Aorta (tissue), 5 donors: ENCODE measurements at regions of chr11 and their contacts with region 1.

Region 1: GRCh38 chr11:12433571-12434324 is 56.4 kb downstream of the PARVA start:
- DNase-seq: peak; percentile 66 to 81
- ATAC-seq: peak; percentile 36
- H3K4me3 ChIP-seq: no peak overlapping the region
- H3K27ac ChIP-seq: peak overlapping the region; percentile 97 to 99
- H3K4me1 ChIP-seq: peaks cover 15 to 28% of the 10 kb centered on the region in 2 donors
- H3K27me3 ChIP-seq: no peaks in the 10 kb centered on the region

Region 2: DNA sequence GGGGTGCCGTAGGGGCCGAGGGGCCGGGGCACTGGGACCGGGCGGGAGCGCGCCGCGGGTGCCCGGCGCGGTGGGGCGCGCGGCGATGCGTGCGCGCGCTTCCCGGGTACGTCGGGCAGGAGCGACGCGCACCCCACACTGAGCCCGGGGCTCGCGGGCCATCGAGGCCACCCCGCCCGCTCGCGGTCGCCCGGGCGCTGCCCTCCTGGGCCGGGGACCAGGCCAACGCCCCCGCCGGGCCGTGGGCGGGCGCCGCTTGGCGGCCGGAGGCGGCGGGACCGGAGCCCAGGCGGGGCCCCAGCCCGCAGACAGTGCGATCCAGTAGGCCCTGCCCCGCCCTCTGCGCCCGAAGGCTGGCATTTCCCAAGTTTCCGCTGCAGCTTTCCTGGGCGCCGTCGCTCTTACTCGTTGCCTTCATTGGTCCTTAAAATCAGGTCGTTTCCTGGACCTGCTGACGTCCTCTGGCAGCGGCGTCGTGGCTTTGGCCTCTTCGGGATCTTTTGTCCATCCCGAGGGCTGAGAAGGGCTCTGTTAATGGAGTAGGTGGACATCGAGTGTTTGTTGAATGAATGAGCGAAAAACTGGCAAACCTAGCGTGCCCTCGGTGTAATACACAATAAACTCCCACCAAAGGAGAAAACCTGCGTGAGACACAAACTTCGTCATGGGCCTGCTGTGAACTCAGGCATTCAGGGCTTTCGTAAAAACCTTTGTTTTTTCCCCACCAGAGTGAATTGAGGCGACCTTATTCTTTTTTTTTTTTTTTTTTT is 55.7 kb before region 1 on chr11:
- intact Hi-C with region 1: loop called in 1 of 2 experiments (anchors 2 kb)
- DNase-seq: peak; percentile 88 to 94
- ATAC-seq: peak; percentile 80
- H3K4me3 ChIP-seq: peak overlapping the region; percentile 62 to 95
- H3K27ac ChIP-seq: peak overlapping the region; percentile 89 to 99
- H3K4me1 ChIP-seq: peaks cover 0 to 4% of the 10 kb centered on the region in 2 donors
- H3K27me3 ChIP-seq: no peaks in the 10 kb centered on the region

Region 3: DNA sequence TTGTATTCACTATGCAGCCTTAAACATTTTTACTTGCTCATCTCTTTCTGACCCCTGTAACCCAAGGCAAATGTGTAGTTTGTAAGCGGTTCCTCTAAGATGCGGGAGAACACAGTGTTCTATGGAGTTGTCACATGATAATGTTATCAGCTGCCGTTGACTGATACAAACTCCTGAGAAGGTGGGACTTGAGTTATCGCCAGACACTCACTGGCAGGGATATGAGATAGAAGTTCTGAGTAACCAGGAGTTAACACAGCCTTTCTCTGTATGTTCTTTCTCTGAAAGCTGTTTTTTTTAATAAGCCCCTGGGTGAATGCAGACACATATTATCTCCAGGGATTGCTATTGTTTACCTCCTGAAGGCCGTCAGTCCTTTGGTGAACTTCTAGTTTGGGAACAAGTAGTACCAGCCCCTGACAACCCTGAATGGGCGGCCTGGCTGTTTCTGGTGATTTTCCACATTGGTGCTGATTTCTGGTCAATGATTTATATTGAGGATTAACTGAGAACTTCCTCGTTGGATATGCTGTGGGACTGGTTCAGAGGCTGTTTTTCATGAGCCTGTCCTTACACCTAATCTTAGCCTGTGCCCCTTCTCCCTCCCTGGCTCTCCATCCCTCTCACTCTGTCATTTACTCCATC is 420.0 kb after region 1 on chr11:
- intact Hi-C with region 1: no loop called
- DNase-seq: no peak
- ATAC-seq: peak; percentile 51
- H3K4me3 ChIP-seq: no peak overlapping the region
- H3K27ac ChIP-seq: no peak overlapping the region
- H3K4me1 ChIP-seq: no peaks in the 10 kb centered on the region
- H3K27me3 ChIP-seq: no peaks in the 10 kb centered on the region